ENCODE measurements at regions of chr2 and their contacts with region 1.

Region 1: DNA sequence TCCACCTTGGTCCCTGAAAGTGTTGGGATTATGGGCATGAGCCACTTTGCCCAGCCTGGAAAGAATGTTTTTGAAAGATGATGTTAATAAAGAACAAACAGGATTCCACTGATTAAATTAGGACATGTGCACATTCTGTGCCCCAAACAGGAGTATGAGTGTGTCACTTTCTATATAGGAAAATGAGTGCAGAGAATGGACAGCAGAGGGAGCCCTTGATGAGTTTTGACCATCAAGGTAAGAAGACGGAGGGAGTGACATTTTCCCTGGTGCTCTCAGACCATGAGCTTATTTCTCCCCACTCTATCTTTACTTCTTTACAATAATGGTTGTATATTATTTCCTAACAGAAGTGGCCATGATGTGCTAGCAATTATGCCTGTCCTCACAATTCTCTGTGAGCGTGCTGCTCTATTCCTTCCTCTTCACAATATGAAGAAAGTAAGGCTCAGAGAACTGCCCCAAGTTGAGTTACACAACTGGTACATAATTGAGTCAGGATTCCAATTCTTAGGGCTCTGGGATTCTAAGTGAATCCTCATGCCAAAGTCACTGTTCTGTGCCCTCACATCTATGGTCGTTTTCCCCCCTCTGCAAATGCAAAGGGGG is 20.6 kb downstream of the RPL37A start:
- DNase-seq: no peak
- ATAC-seq: peak; percentile 94
- H3K4me3 ChIP-seq: no peak overlapping the region
- H3K27ac ChIP-seq: no peak overlapping the region
- H3K4me1 ChIP-seq: no peaks in the 10 kb centered on the region
- H3K27me3 ChIP-seq: no peaks in the 10 kb centered on the region
- CTCF ChIP-seq: peak; percentile 63 to 75 (median 64)
- EP300 ChIP-seq: no peak
- POLR2A ChIP-seq: no peak
- RAD21 ChIP-seq: peak; percentile 74

Region 2: DNA sequence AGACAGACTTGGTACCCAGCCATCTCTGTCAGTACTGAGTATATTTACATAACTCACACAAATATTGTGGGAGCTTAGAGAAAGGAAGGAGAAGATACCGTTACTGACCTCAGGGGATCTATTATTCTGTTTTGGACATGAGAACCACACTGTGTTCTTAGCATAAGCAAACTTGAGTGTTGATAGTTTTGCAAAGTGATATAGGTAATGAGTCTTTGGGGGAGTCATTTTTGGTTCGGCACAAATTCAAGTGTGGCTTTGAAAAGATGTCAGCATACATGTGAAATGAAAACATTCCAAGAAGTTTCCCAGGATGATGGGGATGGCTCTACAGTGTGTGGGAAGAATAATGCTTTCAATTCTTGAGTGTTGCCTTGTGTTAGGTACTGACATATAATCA is 82.9 kb before region 1 on chr2:
- CTCF ChIA-PET with region 1: no interaction called
- POLR2A ChIA-PET with region 1: no interaction called
- RAD21 ChIA-PET with region 1: no interaction called
- SMC1A ChIA-PET with region 1: no interaction called
- in situ Hi-C with region 1: no loop called
- intact Hi-C with region 1: no loop called
- DNase-seq: no peak
- ATAC-seq: no peak
- H3K4me3 ChIP-seq: no peak overlapping the region
- H3K27ac ChIP-seq: no peak overlapping the region
- H3K4me1 ChIP-seq: no peaks in the 10 kb centered on the region
- H3K27me3 ChIP-seq: no peaks in the 10 kb centered on the region
- CTCF ChIP-seq: no peak
- EP300 ChIP-seq: no peak
- POLR2A ChIP-seq: no peak
- RAD21 ChIP-seq: no peak

Region 3: GRCh38 chr2:216507220-216508160 is 11.8 kb before region 1 on chr2:
- CTCF ChIA-PET with region 1: interaction called, 25 read pairs
- POLR2A ChIA-PET with region 1: interaction called, 3 read pairs
- RAD21 ChIA-PET with region 1: interaction called, 7 read pairs
- SMC1A ChIA-PET with region 1: interaction called, 9 read pairs
- in situ Hi-C with region 1: no loop called
- intact Hi-C with region 1: no loop called
- DNase-seq: no peak
- ATAC-seq: peak; percentile 10
- H3K4me3 ChIP-seq: no peak overlapping the region
- H3K27ac ChIP-seq: no peak overlapping the region
- H3K4me1 ChIP-seq: peaks cover 2% of the 10 kb centered on the region; the same call in 1 of the 2 replicates
- H3K27me3 ChIP-seq: no peaks in the 10 kb centered on the region
- CTCF ChIP-seq: no peak
- EP300 ChIP-seq: no peak
- POLR2A ChIP-seq: peak; percentile 45; the same call in 1 of the 2 replicates
- RAD21 ChIP-seq: no peak

Region 4: GRCh38 chr2:216535454-216535995 is 16.3 kb after region 1 on chr2:
- CTCF ChIA-PET with region 1: interaction called, 17 read pairs
- POLR2A ChIA-PET with region 1: no interaction called
- RAD21 ChIA-PET with region 1: interaction called, 7 read pairs
- SMC1A ChIA-PET with region 1: interaction called, 3 read pairs
- in situ Hi-C with region 1: no loop called
- intact Hi-C with region 1: no loop called
- DNase-seq: no peak
- ATAC-seq: no peak
- H3K4me3 ChIP-seq: no peak overlapping the region
- H3K27ac ChIP-seq: no peak overlapping the region
- H3K4me1 ChIP-seq: peaks cover 13% of the 10 kb centered on the region
- H3K27me3 ChIP-seq: no peaks in the 10 kb centered on the region
- CTCF ChIP-seq: no peak
- EP300 ChIP-seq: no peak
- POLR2A ChIP-seq: no peak
- RAD21 ChIP-seq: no peak

Region 5: DNA sequence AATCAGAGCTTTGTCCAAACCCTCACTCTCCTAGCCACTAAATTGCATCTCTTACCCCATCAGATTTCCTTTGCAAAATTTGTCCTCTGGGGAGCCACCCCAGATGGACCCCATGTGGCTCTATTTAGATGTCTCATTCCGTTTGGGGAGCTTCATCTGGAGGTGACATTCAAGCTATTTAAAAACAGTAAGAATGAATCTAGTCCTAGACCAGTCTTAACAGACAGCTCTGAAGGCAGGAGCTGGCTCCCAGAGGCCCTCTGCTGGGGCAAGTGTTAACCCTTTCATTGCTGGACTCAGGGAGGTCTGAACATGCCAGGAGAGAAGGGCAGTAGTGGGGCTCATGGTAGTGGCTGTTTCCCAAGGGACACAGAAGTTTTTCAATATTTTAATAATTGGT is 38.6 kb after region 1 on chr2:
- CTCF ChIA-PET with region 1: interaction called, 10 read pairs
- POLR2A ChIA-PET with region 1: no interaction called
- RAD21 ChIA-PET with region 1: no interaction called
- SMC1A ChIA-PET with region 1: interaction called, 3 read pairs
- in situ Hi-C with region 1: no loop called
- intact Hi-C with region 1: no loop called
- DNase-seq: no peak
- ATAC-seq: no peak
- H3K4me3 ChIP-seq: no peak overlapping the region
- H3K27ac ChIP-seq: no peak overlapping the region
- H3K4me1 ChIP-seq: no peaks in the 10 kb centered on the region
- H3K27me3 ChIP-seq: no peaks in the 10 kb centered on the region; a peak in 1 of 4 replicates
- CTCF ChIP-seq: no peak
- EP300 ChIP-seq: no peak
- POLR2A ChIP-seq: no peak
- RAD21 ChIP-seq: no peak

Region 6: GRCh38 chr2:216590780-216591179 is 71.5 kb after region 1 on chr2:
- CTCF ChIA-PET with region 1: no interaction called
- POLR2A ChIA-PET with region 1: interaction called, 4 read pairs
- RAD21 ChIA-PET with region 1: interaction called, 3 read pairs
- SMC1A ChIA-PET with region 1: interaction called, 4 read pairs
- in situ Hi-C with region 1: no loop called
- intact Hi-C with region 1: loop called (anchors 5 kb)
- DNase-seq: no peak
- ATAC-seq: no peak
- H3K4me3 ChIP-seq: no peak overlapping the region
- H3K27ac ChIP-seq: no peak overlapping the region
- H3K4me1 ChIP-seq: no peaks in the 10 kb centered on the region
- H3K27me3 ChIP-seq: peaks cover 0 to 2% of the 10 kb centered on the region in 2 experiments; a peak in 3 of 4 replicates
- CTCF ChIP-seq: no peak
- EP300 ChIP-seq: no peak
- POLR2A ChIP-seq: no peak
- RAD21 ChIP-seq: no peak

Region 7: GRCh38 chr2:216651351-216651881 is 132.2 kb after region 1 on chr2:
- CTCF ChIA-PET with region 1: interaction called, 42 read pairs
- POLR2A ChIA-PET with region 1: no interaction called
- RAD21 ChIA-PET with region 1: interaction called, 11 read pairs
- SMC1A ChIA-PET with region 1: interaction called, 9 read pairs
- in situ Hi-C with region 1: no loop called
- intact Hi-C with region 1: no loop called
- DNase-seq: no peak
- ATAC-seq: no peak
- H3K4me3 ChIP-seq: no peak overlapping the region
- H3K27ac ChIP-seq: no peak overlapping the region
- H3K4me1 ChIP-seq: no peaks in the 10 kb centered on the region
- H3K27me3 ChIP-seq: peaks cover 0 to 3% of the 10 kb centered on the region in 2 experiments; a peak in 1 of 4 replicates
- CTCF ChIP-seq: no peak
- EP300 ChIP-seq: no peak
- POLR2A ChIP-seq: no peak
- RAD21 ChIP-seq: no peak

Region 8: DNA sequence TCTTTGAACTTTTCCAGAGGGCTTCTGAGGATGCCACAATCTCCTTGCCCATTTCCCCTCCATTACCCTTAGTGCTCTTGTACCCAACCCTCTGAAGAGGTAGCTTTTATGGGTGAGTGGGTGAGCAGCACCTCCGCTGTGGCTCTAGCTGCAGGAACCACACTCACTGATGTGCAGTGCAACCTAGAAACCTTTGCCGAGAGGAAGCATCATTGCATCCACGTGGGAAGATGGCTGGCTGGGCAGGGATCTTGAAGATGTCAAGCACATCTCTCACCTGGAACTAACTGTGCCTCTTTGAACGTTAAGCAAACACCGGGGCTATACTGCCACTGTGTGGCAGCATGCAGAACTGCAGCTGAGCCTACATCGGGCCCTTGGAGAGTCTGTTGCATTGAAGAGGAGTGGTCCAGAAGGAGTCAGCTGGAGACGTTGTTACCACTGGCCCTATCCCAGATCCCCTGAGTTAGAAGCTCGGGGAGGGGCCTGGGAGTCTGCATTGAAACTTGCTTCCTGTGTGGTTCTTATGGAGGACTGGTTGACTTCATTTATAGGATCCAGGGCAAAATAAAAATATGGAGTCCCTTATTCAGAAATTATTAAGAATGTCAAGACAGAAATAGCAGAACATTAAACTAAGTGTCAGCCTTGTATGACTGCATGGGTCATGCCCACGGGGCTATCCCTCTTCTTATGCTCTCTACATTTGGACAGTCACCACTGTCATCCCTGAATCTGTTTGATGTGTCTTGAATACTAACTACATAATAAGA is 147.4 kb after region 1 on chr2:
- CTCF ChIA-PET with region 1: interaction called, 475 read pairs
- POLR2A ChIA-PET with region 1: interaction called, 4 read pairs
- RAD21 ChIA-PET with region 1: interaction called, 239 read pairs
- SMC1A ChIA-PET with region 1: interaction called, 226 read pairs
- in situ Hi-C with region 1: loop called (anchors 5 kb)
- intact Hi-C with region 1: loop called (anchors 1 kb)
- DNase-seq: peak; percentile 19
- ATAC-seq: peak; percentile 92
- H3K4me3 ChIP-seq: no peak overlapping the region
- H3K27ac ChIP-seq: no peak overlapping the region
- H3K4me1 ChIP-seq: no peaks in the 10 kb centered on the region
- H3K27me3 ChIP-seq: peaks cover 2 to 5% of the 10 kb centered on the region in 2 experiments
- CTCF ChIP-seq: peak; percentile 98 to 100 (median 98)
- EP300 ChIP-seq: no peak
- POLR2A ChIP-seq: no peak
- RAD21 ChIP-seq: peak; percentile 97

Region 9: GRCh38 chr2:217054791-217055190 is 535.5 kb after region 1 on chr2:
- CTCF ChIA-PET with region 1: no interaction called
- POLR2A ChIA-PET with region 1: no interaction called
- RAD21 ChIA-PET with region 1: no interaction called
- SMC1A ChIA-PET with region 1: no interaction called
- in situ Hi-C with region 1: no loop called
- intact Hi-C with region 1: no loop called
- DNase-seq: no peak
- ATAC-seq: peak; percentile 91
- H3K4me3 ChIP-seq: no peak overlapping the region
- H3K27ac ChIP-seq: no peak overlapping the region
- H3K4me1 ChIP-seq: no peaks in the 10 kb centered on the region
- H3K27me3 ChIP-seq: no peaks in the 10 kb centered on the region; a peak in 1 of 4 replicates
- CTCF ChIP-seq: no peak
- EP300 ChIP-seq: peak in 1 of 2 experiments; percentile 45; a peak in 1 of 4 replicates
- POLR2A ChIP-seq: no peak
- RAD21 ChIP-seq: no peak

Measured in GM12878 (cell line).